ENCODE measurements at regions of chr6 and their contacts with region 1.

Region 1: GRCh38 chr6:30626484-30627366 is at the start of gene ATAT1:
- DNase-seq: peak; percentile 78 to 95 (median 92)
- ATAC-seq: peak; percentile 99
- H3K4me3 ChIP-seq: peak within 1 kb of the TSS; percentile 68 to 78
- H3K4me3 Mint-ChIP-seq: peak within 1 kb of the TSS; percentile 89
- H3K27ac ChIP-seq: peak within 1 kb of the TSS; percentile 85 to 94
- H3K27ac Mint-ChIP-seq: peak within 1 kb of the TSS; percentile 97
- H3K4me1 ChIP-seq: peaks cover 16% of the 10 kb centered on the region
- H3K4me1 Mint-ChIP-seq: peaks cover 29% of the 10 kb centered on the region
- H3K27me3 ChIP-seq: no peaks in the 10 kb centered on the region
- H3K27me3 Mint-ChIP-seq: no peaks in the 10 kb centered on the region
- CTCF ChIP-seq: peak; percentile 61
- total RNA-seq, gene ATAT1: 4.2 to 6.8 TPM

Region 2: GRCh38 chr6:30672445-30673253 is 45.9 kb after region 1 on chr6 and contains the start of gene DHX16:
- CTCF ChIA-PET with region 1: interaction called, 12 read pairs
- POLR2A ChIA-PET with region 1: interaction called, 5 read pairs
- intact Hi-C with region 1: loop called (anchors 1 kb)
- DNase-seq: peak; percentile 77 to 96 (median 90)
- ATAC-seq: peak; percentile 79
- H3K4me3 ChIP-seq: peak within 1 kb of the TSS; percentile 69 to 81
- H3K4me3 Mint-ChIP-seq: peak within 1 kb of the TSS; percentile 90
- H3K27ac ChIP-seq: peak within 1 kb of the TSS; percentile 51 to 71
- H3K27ac Mint-ChIP-seq: peak within 1 kb of the TSS; percentile 82
- H3K4me1 ChIP-seq: peaks cover 15% of the 10 kb centered on the region
- H3K4me1 Mint-ChIP-seq: peaks cover 38% of the 10 kb centered on the region
- H3K27me3 ChIP-seq: no peaks in the 10 kb centered on the region
- H3K27me3 Mint-ChIP-seq: no peaks in the 10 kb centered on the region
- CTCF ChIP-seq: peak; percentile 38
- total RNA-seq, gene DHX16: 15.8 to 17.9 TPM

Region 3: GRCh38 chr6:30700340-30700739 is 73.6 kb after region 1 on chr6:
- CTCF ChIA-PET with region 1: no interaction called
- POLR2A ChIA-PET with region 1: no interaction called
- intact Hi-C with region 1: no loop called
- DNase-seq: no peak
- ATAC-seq: no peak
- H3K4me3 ChIP-seq: no peak overlapping the region
- H3K4me3 Mint-ChIP-seq: no peak overlapping the region
- H3K27ac ChIP-seq: no peak overlapping the region
- H3K27ac Mint-ChIP-seq: no peak overlapping the region
- H3K4me1 ChIP-seq: no peaks in the 10 kb centered on the region
- H3K4me1 Mint-ChIP-seq: no peaks in the 10 kb centered on the region
- H3K27me3 ChIP-seq: no peaks in the 10 kb centered on the region
- H3K27me3 Mint-ChIP-seq: no peaks in the 10 kb centered on the region
- CTCF ChIP-seq: no peak

Region 4: GRCh38 chr6:30744054-30744805 is 117.5 kb after region 1 on chr6 and contains the start of gene IER3:
- CTCF ChIA-PET with region 1: no interaction called
- POLR2A ChIA-PET with region 1: no interaction called
- intact Hi-C with region 1: no loop called
- DNase-seq: peak; percentile 27 to 90 (median 64)
- ATAC-seq: peak; percentile 57
- H3K4me3 ChIP-seq: peak within 1 kb of the TSS; percentile 75 to 84
- H3K4me3 Mint-ChIP-seq: peak within 1 kb of the TSS; percentile 91
- H3K27ac ChIP-seq: peak within 1 kb of the TSS; percentile 49 to 68
- H3K27ac Mint-ChIP-seq: peak within 1 kb of the TSS; percentile 69
- H3K4me1 ChIP-seq: peaks cover 30% of the 10 kb centered on the region
- H3K4me1 Mint-ChIP-seq: peaks cover 45% of the 10 kb centered on the region
- H3K27me3 ChIP-seq: no peaks in the 10 kb centered on the region
- H3K27me3 Mint-ChIP-seq: no peaks in the 10 kb centered on the region
- CTCF ChIP-seq: peak; percentile 74
- total RNA-seq, gene IER3: 9.7 to 9.9 TPM

Measured in CD8-positive, alpha-beta T cell (primary cell).